Natural killer cell (primary cell): ENCODE measurements at regions of chr10 and their contacts with region 1.

Region 1: GRCh38 chr10:8183241-8183704 is 128.8 kb downstream of the GATA3 start:
- DNase-seq: peak in 1 of 2 donors; percentile 86
- ATAC-seq: peak; percentile 92 to 96 (median 95)
- H3K4me3 ChIP-seq: no peak overlapping the region
- H3K4me3 Mint-ChIP-seq: peak overlapping the region; percentile 18
- H3K27ac ChIP-seq: peak overlapping the region; percentile 36
- H3K27ac Mint-ChIP-seq: peak overlapping the region; percentile 83 to 89
- H3K4me1 ChIP-seq: peaks cover 8% of the 10 kb centered on the region
- H3K4me1 Mint-ChIP-seq: peaks cover 21 to 29% of the 10 kb centered on the region in 2 donors
- H3K27me3 ChIP-seq: no peaks in the 10 kb centered on the region
- H3K27me3 Mint-ChIP-seq: peaks cover 4 to 23% of the 10 kb centered on the region in 2 donors
- CTCF ChIP-seq: no peak

Region 2: DNA sequence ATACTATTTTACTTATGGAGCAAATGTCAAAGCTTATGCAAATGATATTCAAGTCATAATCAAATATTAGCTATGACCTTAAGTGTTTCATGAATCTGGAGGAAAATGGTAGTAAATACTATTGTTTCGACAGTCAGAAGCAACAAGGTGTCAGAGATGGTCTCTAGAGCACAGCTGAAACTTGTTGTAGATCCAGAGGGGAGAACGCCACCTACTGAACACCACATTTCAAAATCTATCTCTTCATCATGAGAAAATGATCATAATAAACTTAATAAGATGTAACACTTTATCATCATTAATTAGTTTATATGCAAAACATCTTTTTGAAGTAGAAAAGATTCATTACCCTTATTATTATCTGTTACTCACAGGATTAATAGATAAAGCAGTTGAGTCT is 289.9 kb after region 1 on chr10:
- intact Hi-C with region 1: loop called (anchors 5 kb)
- DNase-seq: peak in 1 of 2 donors; percentile 75
- ATAC-seq: peak in 2 of 3 donors; percentile 59 to 73
- H3K4me3 ChIP-seq: no peak overlapping the region
- H3K4me3 Mint-ChIP-seq: no peak overlapping the region
- H3K27ac ChIP-seq: no peak overlapping the region
- H3K27ac Mint-ChIP-seq: no peak overlapping the region
- H3K4me1 ChIP-seq: no peaks in the 10 kb centered on the region
- H3K4me1 Mint-ChIP-seq: no peaks in the 10 kb centered on the region
- H3K27me3 ChIP-seq: peaks cover 5% of the 10 kb centered on the region
- H3K27me3 Mint-ChIP-seq: peaks cover 28 to 40% of the 10 kb centered on the region in 2 donors
- CTCF ChIP-seq: no peak